ENCODE measurements at regions of chr15 and their contacts with region 1.

Region 1: DNA sequence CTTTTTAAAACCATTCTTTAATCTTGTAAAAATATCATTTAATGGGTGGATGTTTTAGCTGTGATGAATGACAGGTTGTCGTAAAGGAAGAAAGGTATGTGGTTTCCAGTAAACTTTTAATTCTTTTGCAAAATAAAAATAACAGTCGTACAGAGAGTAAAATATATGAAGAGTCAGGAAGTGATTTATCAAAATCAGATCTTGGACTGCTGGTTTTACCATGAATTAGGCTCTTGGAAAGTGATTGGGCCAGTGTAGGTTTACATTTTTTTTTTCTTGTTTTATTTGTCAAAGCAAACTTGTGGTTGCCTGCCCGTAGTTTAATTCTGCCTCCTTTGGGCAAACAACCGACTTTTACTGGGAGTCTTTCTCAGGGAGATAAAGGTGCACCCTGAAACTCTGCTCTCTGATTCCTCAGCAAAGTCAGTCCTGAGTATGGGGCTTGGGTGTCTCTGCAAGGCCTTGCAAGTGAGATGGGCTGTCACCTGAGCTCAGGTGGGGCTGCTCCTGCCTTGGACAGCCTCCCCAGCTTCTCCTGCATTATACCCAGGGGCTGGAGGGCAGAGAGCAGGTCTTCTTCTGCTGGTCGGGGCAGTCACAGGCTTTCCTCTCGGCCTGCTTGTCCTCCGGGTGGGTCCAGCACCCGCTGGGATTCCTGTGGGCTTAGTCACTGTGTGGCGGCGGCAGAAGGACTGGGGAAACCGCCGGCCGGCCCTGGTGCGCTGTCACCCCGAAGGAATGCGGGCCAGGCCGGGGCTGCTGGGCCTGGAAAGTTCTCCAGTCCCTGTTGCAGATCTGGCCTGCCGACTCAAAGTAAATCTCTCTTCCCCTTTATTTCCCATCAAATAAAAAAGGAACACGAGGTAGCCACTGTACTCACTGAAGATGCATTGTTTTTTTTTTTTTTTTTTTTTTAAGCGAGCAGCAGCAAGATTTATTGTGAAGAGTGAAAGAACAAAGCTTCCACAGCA is 79.1 kb downstream of the IGF1R start:
- DNase-seq: peak; percentile 87 to 95 (median 93)
- ATAC-seq: peak; percentile 87 to 95 (median 94)
- H3K4me3 ChIP-seq: peak overlapping the region in 3 of 12 donors; percentile 3 to 15 (median 14)
- H3K27ac ChIP-seq: peak overlapping the region; percentile 52 to 95 (median 90)
- H3K4me1 ChIP-seq: peaks cover 3 to 95% (median 73%) of the 10 kb centered on the region in 12 donors
- H3K27me3 ChIP-seq: no peaks in the 10 kb centered on the region
- CTCF ChIP-seq: no peak
- POLR2A ChIP-seq: no peak

Region 2: DNA sequence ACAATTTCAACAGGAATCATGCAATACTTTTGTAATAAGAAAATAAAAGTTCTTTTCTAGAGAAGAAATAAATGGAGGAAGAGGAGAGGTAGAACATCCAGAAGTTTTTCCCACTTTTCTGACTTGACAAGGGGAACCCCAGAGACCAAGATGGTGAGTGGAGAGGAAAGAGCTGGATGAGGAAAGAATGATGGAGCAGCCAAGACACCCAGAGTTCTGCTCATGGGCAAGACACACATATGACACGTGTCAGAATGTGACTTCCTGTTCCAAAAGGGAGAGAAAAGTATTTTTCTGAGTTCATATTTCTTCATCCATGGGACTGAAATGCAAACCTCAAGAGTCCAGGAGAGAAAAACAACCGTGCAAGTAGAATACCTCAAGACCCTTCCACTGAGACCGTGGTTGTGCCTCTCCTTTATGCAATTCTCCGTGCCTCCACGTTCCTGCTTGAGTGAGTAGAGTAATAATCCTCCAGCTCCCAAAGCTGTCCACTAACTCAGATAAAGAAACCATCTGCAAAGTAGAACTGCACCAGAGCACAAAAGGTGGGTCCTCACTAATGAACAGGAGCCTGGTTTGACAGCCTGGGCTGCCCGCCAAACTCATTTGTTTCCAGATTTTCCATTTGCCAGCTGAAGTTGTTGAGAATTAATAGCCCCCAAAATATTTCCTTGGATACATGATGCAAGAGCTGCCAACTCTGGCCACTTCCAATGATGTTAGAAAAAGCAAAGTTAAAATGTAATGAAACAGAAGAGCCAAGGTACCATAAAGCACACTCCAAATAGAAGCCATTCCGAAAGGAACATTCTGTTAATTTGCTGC is 351.7 kb before region 1 on chr15:
- intact Hi-C with region 1: no loop called
- DNase-seq: peak in 1 of 5 donors; percentile 36
- ATAC-seq: no peak
- H3K4me3 ChIP-seq: no peak overlapping the region
- H3K27ac ChIP-seq: peak overlapping the region in 1 of 12 donors; percentile 33
- H3K4me1 ChIP-seq: no peaks in the 10 kb centered on the region
- H3K27me3 ChIP-seq: peaks cover 0 to 7% (median 0%) of the 10 kb centered on the region in 9 donors
- CTCF ChIP-seq: no peak
- POLR2A ChIP-seq: no peak

Region 3: DNA sequence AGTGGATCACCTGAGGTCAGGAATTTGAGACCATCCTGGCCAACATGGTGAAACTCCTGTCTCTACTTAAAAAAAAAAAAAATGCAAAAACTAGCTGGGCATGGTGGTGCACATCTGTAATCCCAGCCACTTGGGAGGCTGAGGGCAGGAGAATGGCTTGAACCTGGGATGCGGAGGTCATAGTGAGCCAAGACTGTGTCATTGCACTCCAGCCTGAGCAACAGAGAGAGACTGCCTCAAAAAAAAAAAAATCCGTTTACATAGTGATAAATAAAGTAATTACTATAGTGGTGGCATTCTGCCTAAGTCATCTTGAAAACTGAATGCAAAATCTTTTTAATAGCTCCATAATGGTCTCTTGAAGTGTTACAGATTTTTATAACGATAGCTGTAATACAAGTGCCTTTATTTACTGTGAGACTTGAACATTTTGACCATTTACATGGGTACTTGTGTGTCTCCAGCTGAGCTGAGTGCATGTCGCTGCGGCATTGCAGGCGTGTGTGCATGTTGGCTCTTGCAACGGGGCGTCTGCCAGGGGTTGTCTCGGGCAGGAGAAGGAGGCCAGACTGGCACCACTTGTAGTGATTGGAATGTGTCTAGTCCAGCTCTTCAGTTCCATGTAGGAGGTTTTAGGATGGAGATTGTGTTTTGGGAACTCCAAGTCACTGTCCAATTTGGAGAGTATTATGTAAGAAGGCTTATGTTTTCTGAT is 32.9 kb after region 1 on chr15:
- intact Hi-C with region 1: loop called in 1 of 10 experiments (anchors 5 kb)
- DNase-seq: peak in 4 of 5 donors; percentile 39 to 77 (median 58)
- ATAC-seq: peak; percentile 68 to 81 (median 78)
- H3K4me3 ChIP-seq: no peak overlapping the region
- H3K27ac ChIP-seq: peak overlapping the region in 1 of 12 donors; percentile 16
- H3K4me1 ChIP-seq: peaks cover 0 to 62% (median 30%) of the 10 kb centered on the region in 12 donors
- H3K27me3 ChIP-seq: no peaks in the 10 kb centered on the region
- CTCF ChIP-seq: no peak
- POLR2A ChIP-seq: no peak

Measured in heart left ventricle (tissue), 16 donors.